Activated CD4-positive, alpha-beta T cell treated with anti-CD3 and anti-CD28 coated beads, Interleukin-2, amount 10 ng/mL, durations not matched to agents 24 days and 14 days (primary cell): ENCODE measurements at regions of chr7 and their contacts with region 1.

Region 1: GRCh38 chr7:87199700-87200450 is 19.7 kb downstream of the TMEM243 start:
- DNase-seq: peak; percentile 52
- H3K4me3 Mint-ChIP-seq: no peak overlapping the region
- H3K27ac Mint-ChIP-seq: peak overlapping the region; percentile 29
- H3K4me1 Mint-ChIP-seq: peaks cover 20% of the 10 kb centered on the region
- H3K27me3 Mint-ChIP-seq: no peaks in the 10 kb centered on the region

Region 2: GRCh38 chr7:87188930-87189329 is 10.9 kb before region 1 on chr7:
- intact Hi-C with region 1: loop called (anchors 2 kb)
- DNase-seq: no peak
- H3K4me3 Mint-ChIP-seq: no peak overlapping the region
- H3K27ac Mint-ChIP-seq: peak overlapping the region; percentile 8
- H3K4me1 Mint-ChIP-seq: peaks cover 18% of the 10 kb centered on the region
- H3K27me3 Mint-ChIP-seq: no peaks in the 10 kb centered on the region

Region 3: DNA sequence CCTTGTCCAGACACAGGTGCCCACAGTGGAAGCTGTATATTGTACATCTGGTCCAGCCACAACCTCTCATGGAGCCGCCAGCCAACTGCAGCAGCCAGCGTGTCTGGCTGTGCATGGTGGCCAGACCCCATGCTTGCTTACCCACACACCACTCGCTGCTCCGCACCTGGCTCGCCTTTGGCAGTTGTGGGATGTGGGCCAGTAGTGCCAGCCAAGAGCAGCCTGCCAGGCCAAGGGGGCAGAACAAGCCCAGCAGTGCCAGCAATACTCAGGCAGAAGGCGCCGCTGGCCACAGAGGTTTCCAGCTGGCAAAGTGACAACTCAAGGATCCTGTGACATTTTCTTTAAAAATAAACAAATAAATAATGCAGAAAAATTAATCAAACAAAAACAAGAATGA is 31.4 kb after region 1 on chr7:
- intact Hi-C with region 1: loop called (anchors 5 kb)
- DNase-seq: no peak
- H3K4me3 Mint-ChIP-seq: no peak overlapping the region
- H3K27ac Mint-ChIP-seq: no peak overlapping the region
- H3K4me1 Mint-ChIP-seq: peaks cover 5% of the 10 kb centered on the region
- H3K27me3 Mint-ChIP-seq: peaks cover 8% of the 10 kb centered on the region

Region 4: DNA sequence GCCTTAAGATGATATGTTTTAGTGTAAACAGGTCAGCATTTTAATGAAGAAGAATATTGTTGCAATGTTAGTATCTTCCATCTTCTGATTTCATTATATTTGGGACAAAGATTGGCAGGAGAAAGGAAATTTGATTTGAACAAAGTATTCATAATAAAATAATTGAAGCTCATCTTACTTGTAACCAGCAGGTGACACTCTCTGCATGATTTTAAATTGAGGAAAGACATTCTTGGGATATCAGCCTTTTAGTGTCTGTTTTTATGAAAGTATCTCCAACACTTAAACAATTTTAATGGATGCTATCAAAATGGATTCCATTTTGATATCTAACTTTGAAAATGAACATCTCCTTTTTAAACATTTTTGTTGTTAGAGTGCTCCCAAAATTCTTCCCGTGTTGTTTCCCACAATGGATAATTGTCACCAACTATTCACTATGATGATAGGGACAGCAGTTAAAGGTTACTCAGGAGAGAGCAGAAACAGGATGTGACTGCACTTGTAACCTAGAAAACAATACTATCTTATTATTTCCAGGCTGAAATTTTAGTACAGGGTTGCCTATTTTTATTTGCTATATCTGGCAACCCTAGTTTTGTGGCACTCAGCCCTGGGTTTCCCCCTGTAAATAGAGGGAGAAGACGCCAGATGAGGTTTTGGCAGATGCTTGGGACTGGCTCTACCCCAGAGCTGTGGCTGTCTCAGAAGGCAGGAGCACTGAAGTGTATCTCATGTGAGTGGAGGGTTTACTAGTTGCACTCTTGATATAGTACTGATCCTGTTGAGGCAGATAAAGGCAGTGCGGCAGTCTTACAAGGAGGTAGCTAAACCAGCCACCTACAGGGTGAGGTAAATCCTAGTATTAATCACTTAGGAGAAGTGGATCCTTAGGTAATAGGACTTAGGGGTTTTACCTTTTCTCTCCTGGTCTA is 306.6 kb after region 1 on chr7:
- intact Hi-C with region 1: no loop called
- DNase-seq: no peak
- H3K4me3 Mint-ChIP-seq: no peak overlapping the region
- H3K27ac Mint-ChIP-seq: no peak overlapping the region
- H3K4me1 Mint-ChIP-seq: peaks cover 12% of the 10 kb centered on the region
- H3K27me3 Mint-ChIP-seq: no peaks in the 10 kb centered on the region